Endothelial cell of umbilical vein (primary cell): ENCODE measurements at regions of chr3 and their contacts with region 1.

Region 1: DNA sequence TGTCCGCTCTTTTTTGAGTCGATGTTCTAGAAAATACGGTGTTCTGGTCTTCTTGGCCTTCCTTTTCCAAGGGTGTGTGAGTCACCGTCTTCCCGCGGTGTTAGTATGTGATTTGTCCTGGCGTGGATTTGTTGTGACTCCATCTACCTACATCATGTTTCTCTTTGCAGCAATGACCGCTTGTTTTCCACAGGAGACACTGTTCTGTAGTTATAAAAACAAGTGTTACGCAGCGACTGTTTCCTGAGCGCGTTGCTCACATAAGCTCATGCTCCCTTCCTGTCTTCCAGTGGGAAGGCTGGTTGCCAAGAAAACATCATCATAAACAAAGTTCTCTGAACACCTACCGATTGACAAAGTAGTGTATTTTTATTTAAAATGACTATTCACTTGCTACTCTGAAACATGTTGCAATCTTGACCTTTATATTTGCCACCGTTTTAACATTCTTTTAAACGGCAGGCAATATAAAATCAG is 18.9 kb downstream of the USP13 start:
- DNase-seq: peak; percentile 100
- H3K4me3 ChIP-seq: peak overlapping the region in 1 of 3 experiments; percentile 37
- H3K27ac ChIP-seq: peak overlapping the region; percentile 94
- H3K4me1 ChIP-seq: peaks cover 15% of the 10 kb centered on the region
- H3K27me3 ChIP-seq: no peaks in the 10 kb centered on the region
- CTCF ChIP-seq: no peak
- POLR2A ChIP-seq: no peak

Region 2: DNA sequence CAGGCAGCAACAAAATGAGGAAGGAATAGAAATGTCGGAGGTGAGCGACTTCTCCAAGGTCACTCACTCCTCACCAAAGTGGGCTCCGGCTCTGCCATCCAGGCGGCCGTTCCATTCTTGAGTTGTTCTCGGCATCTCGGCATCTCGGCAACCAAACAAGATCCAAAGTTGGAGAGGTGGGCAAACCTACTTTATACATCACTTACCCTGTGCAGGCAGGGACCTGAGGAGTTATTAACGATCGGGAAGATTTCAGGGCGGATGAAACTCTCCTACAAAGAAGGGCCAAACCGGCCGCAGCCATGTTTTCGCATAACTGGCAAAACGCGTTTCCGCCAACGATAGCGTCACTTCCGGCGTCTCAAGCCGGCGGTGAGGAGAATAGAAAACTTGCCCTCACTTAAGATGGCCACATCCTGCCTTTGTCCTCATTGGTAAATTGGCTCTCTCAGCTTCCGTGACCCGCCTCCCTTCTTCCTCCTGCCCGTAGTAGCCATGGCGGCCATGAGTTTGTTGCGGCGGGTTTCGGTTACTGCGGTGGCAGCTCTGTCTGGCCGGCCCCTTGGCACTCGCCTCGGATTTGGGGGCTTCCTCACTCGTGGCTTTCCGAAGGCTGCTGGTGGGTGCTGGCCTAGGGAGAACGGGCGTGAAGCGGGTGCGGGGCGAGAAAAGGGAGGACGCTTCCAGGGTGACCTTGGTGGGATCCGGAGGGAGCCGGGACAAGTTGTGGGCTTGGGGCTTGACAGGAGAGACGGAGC is 67.3 kb before region 1 on chr3 and contains the starts of genes MRPL47 and NDUFB5:
- CTCF ChIA-PET with region 1: interaction called, 3 read pairs
- POLR2A ChIA-PET with region 1: no interaction called
- dilution Hi-C with region 1: no loop called
- intact Hi-C with region 1: loop called (anchors 2 kb)
- DNase-seq: peak; percentile 97
- H3K4me3 ChIP-seq: peak within 1 kb of the TSS; percentile 59 to 94 (median 77)
- H3K27ac ChIP-seq: peak within 1 kb of the TSS; percentile 84
- H3K4me1 ChIP-seq: peaks cover 14% of the 10 kb centered on the region
- H3K27me3 ChIP-seq: no peaks in the 10 kb centered on the region
- CTCF ChIP-seq: no peak
- POLR2A ChIP-seq: peak; percentile 94
- total RNA-seq, gene MRPL47: 47.0 and 51.2 TPM in 2 replicates
- total RNA-seq, gene NDUFB5: 68.3 and 74.9 TPM in 2 replicates

Region 3: GRCh38 chr3:179613807-179614206 is 58.0 kb before region 1 on chr3:
- CTCF ChIA-PET with region 1: no interaction called
- POLR2A ChIA-PET with region 1: no interaction called
- dilution Hi-C with region 1: no loop called
- intact Hi-C with region 1: loop called (anchors 1 kb)
- DNase-seq: peak; percentile 83
- H3K4me3 ChIP-seq: peak overlapping the region in 1 of 3 experiments; percentile 35
- H3K27ac ChIP-seq: peak overlapping the region; percentile 89
- H3K4me1 ChIP-seq: peaks cover 35% of the 10 kb centered on the region
- H3K27me3 ChIP-seq: no peaks in the 10 kb centered on the region
- CTCF ChIP-seq: no peak
- POLR2A ChIP-seq: no peak

Region 4: DNA sequence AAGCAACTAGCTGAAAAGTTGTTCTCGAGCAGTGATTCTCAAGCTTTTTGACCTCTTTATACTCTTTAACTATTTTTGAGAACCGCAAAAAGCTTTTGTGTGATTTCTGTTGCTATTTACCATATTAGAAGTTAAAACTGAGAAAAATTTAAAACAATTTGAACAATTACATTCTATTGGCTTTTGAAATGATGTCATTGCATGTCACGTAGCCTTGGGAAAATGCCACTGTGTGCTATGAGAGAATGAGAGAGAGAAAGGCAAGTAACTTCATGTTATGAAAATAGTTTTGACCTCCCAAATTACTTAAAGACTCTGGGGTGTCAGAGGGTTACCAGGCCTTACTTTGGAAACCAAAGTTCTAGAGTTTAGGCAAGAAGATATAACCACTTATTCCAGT is 10.9 kb before region 1 on chr3:
- CTCF ChIA-PET with region 1: interaction called, 10 read pairs
- POLR2A ChIA-PET with region 1: no interaction called
- dilution Hi-C with region 1: no loop called
- intact Hi-C with region 1: no loop called
- DNase-seq: no peak
- H3K4me3 ChIP-seq: no peak overlapping the region
- H3K27ac ChIP-seq: no peak overlapping the region
- H3K4me1 ChIP-seq: peaks cover 1% of the 10 kb centered on the region
- H3K27me3 ChIP-seq: no peaks in the 10 kb centered on the region
- CTCF ChIP-seq: no peak
- POLR2A ChIP-seq: no peak